K562 (cell line): ENCODE measurements at regions of chr9 and their contacts with region 1.

Region 1: GRCh38 chr9:75570538-75570937 is 319.9 kb upstream of the PCSK5 start:
- DNase-seq: no peak
- ATAC-seq: no peak
- H3K4me3 ChIP-seq: no peak overlapping the region
- H3K27ac ChIP-seq: no peak overlapping the region
- H3K4me1 ChIP-seq: no peaks in the 10 kb centered on the region
- H3K27me3 ChIP-seq: no peaks in the 10 kb centered on the region
- CTCF ChIP-seq: no peak
- EP300 ChIP-seq: no peak
- POLR2A ChIP-seq: no peak
- RAD21 ChIP-seq: no peak

Region 2: DNA sequence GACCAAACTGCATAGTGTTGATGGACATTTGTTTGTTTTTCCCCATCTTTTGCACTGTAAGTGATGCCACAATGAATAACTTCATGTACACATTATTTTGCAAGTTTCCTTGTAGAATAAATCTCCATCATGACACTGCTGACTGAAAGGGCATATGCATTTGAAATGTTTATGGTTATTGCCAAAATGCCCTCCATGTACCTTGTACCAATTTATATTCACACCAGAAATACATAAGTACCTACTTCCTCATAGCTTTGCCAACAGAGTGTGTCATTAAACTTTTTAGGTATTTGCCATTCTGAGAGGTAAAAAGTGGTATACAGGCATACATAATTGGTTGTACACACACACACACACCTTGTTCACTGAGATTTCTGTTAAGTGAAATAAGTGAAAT is 41.1 kb before region 1 on chr9:
- CTCF ChIA-PET with region 1: no interaction called
- POLR2A ChIA-PET with region 1: no interaction called
- in situ Hi-C with region 1: no loop called
- intact Hi-C with region 1: loop called (anchors 5 kb)
- DNase-seq: no peak
- ATAC-seq: no peak
- H3K4me3 ChIP-seq: no peak overlapping the region
- H3K27ac ChIP-seq: no peak overlapping the region
- H3K4me1 ChIP-seq: no peaks in the 10 kb centered on the region
- H3K27me3 ChIP-seq: no peaks in the 10 kb centered on the region
- CTCF ChIP-seq: no peak
- EP300 ChIP-seq: no peak
- POLR2A ChIP-seq: no peak
- RAD21 ChIP-seq: no peak

Region 3: GRCh38 chr9:75683591-75683990 is 113.1 kb after region 1 on chr9:
- CTCF ChIA-PET with region 1: no interaction called
- POLR2A ChIA-PET with region 1: no interaction called
- in situ Hi-C with region 1: no loop called
- intact Hi-C with region 1: no loop called
- DNase-seq: no peak
- ATAC-seq: no peak
- H3K4me3 ChIP-seq: no peak overlapping the region
- H3K27ac ChIP-seq: no peak overlapping the region
- H3K4me1 ChIP-seq: no peaks in the 10 kb centered on the region
- H3K27me3 ChIP-seq: no peaks in the 10 kb centered on the region
- CTCF ChIP-seq: no peak
- EP300 ChIP-seq: no peak
- POLR2A ChIP-seq: no peak
- RAD21 ChIP-seq: no peak